GM10248 (cell line): ENCODE measurements at regions of chr3 and their contacts with region 1.

Region 1: GRCh38 chr3:158727206-158728060 is 4.8 kb downstream of the RARRES1 start:
- DNase-seq: peak; percentile 77
- CTCF ChIP-seq: peak; percentile 89

Region 2: GRCh38 chr3:158659454-158660237 is 67.8 kb before region 1 on chr3:
- CTCF ChIA-PET with region 1: interaction called, 14 read pairs
- POLR2A ChIA-PET with region 1: no interaction called
- DNase-seq: peak; percentile 54
- CTCF ChIP-seq: peak; percentile 73

Region 3: DNA sequence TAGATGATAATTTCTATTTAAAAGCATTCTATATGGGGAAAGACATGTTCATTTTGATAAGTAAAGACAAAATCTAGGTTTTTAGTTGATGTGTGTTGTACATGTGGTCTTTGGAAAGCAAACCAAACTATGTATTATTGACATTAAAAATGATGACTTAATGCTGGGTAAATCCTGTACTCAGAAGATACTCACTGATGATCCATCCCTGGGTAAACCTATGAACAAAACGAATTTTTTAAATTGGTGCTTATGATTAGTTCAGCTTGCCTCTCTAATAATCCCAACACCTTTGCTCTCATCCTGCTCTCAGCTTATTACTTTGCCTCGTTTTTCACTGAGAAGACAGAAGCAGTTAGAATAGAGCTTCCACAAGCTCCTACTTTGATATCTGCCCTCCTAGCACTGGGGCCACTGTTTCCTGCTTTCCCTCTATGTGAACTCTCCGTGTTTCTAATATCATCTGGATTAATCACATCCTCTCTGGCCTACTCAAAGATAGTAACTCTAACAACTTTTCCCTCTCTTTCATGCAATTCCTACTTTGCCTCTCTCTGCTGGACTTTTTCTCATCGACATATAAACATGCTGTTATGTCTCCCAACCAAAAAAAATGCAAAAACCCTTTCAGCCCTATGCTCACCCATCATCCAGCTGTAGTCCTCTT is 24.5 kb before region 1 on chr3:
- CTCF ChIA-PET with region 1: interaction called, 27 read pairs
- POLR2A ChIA-PET with region 1: no interaction called
- DNase-seq: no peak
- CTCF ChIP-seq: no peak

Region 4: GRCh38 chr3:158742871-158743663 is 15.6 kb after region 1 on chr3:
- CTCF ChIA-PET with region 1: interaction called, 40 read pairs
- POLR2A ChIA-PET with region 1: no interaction called
- DNase-seq: no peak
- CTCF ChIP-seq: no peak

Region 5: DNA sequence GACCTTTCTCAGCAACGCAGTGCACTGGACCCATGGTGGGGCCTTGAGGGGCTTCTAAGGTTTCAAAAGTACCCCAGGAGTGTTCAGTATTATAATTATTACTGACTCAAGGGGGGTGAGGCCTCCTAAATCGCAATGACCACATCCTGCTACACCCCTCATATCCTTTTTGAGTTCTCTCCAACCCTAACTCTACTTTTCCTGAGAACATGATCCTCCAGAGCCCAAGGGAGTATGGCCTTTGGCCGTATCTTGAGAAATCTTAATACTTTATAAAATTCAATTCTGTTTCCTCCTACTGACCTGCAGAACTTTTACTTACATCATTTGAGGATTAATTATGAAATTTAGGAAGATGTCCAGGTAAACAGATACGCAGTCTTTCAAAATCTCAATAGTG is 35.3 kb after region 1 on chr3:
- CTCF ChIA-PET with region 1: interaction called, 13 read pairs
- POLR2A ChIA-PET with region 1: no interaction called
- DNase-seq: no peak
- CTCF ChIP-seq: no peak

Region 6: DNA sequence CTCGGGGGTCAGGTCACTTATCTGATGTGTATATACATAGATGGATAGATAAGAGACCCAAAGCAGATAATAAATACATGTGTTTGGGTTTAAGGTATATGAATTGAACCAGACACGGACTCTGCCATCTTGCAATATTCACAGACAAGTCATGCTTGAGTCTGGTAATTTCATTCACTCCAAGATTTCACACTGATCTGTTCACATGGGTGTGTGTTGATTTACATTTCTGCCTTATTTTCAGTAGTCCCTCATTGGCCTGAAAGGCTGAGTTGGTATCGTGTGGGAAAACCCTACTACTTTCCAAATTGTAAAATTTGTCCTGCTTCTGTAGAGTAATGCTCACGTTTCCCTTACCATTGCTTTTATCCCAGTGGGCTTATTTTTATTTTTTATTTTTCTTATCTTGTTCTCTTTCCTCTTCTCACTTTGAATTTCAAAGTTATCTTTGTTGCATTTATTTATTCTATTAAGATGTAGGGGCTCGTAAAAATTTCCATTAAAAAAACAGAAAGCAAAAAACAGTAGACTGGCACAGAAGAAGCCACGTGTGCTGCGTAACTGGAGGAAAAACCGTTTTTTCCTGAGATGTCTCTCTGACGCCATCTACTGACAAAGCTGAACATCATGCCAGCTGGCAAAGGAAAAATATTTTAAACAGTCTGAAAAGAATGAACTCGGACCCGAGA is 63.6 kb after region 1 on chr3:
- CTCF ChIA-PET with region 1: interaction called, 80 read pairs
- POLR2A ChIA-PET with region 1: no interaction called
- DNase-seq: peak; percentile 53
- CTCF ChIP-seq: peak; percentile 85

Region 7: GRCh38 chr3:159432682-159433340 is 705.4 kb after region 1 on chr3:
- CTCF ChIA-PET with region 1: no interaction called
- POLR2A ChIA-PET with region 1: no interaction called
- DNase-seq: no peak
- CTCF ChIP-seq: no peak